Esophagus squamous epithelium (tissue), 5 donors: ENCODE measurements at regions of chr6 and their contacts with region 1.

Region 1: DNA sequence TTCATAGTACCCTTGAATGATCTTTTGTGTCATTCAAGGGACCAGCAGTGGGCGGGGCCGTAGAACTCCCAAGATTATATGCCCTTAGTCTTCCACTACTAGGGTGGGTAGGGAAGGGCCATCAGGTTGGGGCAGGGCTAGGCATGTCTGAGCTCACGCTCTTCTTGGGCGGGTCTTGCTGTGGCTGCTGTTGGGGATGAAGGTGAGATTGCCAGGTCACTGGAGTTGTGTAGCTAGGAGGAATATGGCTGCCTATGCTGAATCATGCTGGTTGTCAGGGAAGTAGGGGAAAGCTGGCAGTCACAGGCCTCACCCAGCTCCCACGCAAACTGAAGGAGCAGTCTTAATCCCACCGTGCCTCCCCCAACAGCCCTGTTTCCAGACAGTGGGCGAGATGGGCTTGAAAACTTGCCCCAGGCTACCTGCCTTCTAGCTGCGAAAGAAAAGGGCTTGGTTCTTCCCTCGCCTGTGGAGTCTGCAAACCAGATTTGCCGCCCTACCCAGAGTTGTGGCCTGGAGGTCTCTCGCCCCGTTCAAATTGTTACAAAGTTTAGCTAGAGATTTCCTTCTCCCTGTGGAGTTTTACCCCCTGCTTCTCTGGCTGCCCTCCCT is 76.4 kb upstream of the ADGRF4 start:
- DNase-seq: no peak
- H3K4me3 ChIP-seq: no peak overlapping the region
- H3K27ac ChIP-seq: peak overlapping the region in 2 of 4 donors; percentile 15 to 31
- H3K4me1 ChIP-seq: peaks cover 0 to 7% (median 0%) of the 10 kb centered on the region in 3 donors
- H3K27me3 ChIP-seq: no peaks in the 10 kb centered on the region
- CTCF ChIP-seq: no peak
- POLR2A ChIP-seq: no peak

Region 2: DNA sequence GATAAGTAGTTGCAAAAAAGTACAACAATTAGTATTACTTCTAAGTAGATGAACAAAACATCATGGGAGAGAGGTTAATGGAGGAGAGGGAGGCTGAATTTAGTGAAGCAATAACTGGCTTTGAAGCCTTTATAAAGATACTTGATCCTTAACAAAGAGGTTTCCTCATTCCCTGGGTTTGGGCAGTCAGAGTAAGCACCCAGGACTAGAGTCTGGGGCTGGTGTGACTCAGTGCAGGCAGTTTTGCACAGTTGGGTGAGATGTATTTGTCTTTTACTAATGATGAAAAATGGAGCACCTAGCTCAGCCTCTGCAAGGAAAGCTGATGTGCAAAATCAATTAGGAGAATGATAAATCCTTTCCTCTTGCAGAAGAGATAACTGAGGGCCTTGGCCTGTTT is 148.0 kb after region 1 on chr6:
- intact Hi-C with region 1: loop called (anchors 10 kb)
- DNase-seq: no peak
- H3K4me3 ChIP-seq: no peak overlapping the region
- H3K27ac ChIP-seq: no peak overlapping the region
- H3K4me1 ChIP-seq: no peaks in the 10 kb centered on the region
- H3K27me3 ChIP-seq: no peaks in the 10 kb centered on the region
- CTCF ChIP-seq: no peak
- POLR2A ChIP-seq: no peak